ENCODE measurements at regions of chr4 and their contacts with region 1.

Region 1: GRCh38 chr4:169485791-169486742 is 126.3 kb downstream of the NEK1 start:
- DNase-seq: peak in 7 of 9 donors; percentile 5 to 46 (median 34)
- ATAC-seq: no peak
- H3K4me3 ChIP-seq: no peak overlapping the region
- H3K4me3 Mint-ChIP-seq: no peak overlapping the region
- H3K27ac ChIP-seq: no peak overlapping the region
- H3K27ac Mint-ChIP-seq: no peak overlapping the region
- H3K4me1 ChIP-seq: no peaks in the 10 kb centered on the region
- H3K4me1 Mint-ChIP-seq: no peaks in the 10 kb centered on the region
- H3K27me3 ChIP-seq: no peaks in the 10 kb centered on the region
- H3K27me3 Mint-ChIP-seq: no peaks in the 10 kb centered on the region

Region 2: DNA sequence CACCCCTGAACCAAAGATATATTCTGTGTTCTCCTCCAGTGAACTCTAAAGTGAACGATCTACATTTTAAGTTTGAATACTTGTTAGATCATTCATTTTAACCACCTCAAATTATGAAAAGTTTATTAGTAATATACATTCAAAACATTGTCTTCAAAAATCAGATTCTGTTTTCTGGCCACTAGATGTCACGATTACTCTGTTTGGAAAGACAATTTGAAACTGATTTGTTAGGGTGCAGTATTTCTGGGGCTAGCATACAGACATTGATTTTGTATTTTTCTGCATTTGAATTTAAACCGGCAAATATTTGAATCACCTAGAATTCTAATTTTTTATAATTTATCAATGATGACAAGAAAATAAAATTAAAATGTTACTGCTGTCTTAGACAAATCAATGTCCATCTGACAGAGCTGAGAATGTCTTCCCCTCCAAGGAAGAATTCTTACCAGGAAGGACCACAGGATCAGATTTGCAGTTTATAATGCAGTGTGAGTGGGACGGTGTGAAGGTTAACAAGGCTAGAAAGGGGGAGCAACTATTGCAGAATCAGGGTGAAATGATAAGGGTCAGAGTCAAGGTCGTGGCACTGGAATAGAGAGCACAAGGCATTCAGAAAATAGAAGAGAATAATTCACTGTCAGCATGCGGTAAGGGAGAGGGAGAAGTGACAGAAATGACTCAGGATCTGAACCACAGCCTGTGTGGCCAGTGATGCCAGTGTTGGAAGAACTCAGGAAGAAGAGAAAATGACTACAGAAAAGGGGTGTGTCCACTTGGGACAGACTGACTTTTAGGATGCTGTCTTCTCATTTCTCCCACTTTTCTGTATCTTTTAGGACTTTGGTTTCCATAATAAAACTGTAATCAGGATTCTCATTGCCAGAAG is 1302.1 kb before region 1 on chr4:
- CTCF ChIA-PET with region 1: no interaction called
- POLR2A ChIA-PET with region 1: no interaction called
- intact Hi-C with region 1: loop called (anchors 1 to 5 kb)
- DNase-seq: peak in 4 of 9 donors; percentile 1 to 23 (median 8)
- ATAC-seq: no peak
- H3K4me3 ChIP-seq: no peak overlapping the region
- H3K4me3 Mint-ChIP-seq: no peak overlapping the region
- H3K27ac ChIP-seq: no peak overlapping the region
- H3K27ac Mint-ChIP-seq: no peak overlapping the region
- H3K4me1 ChIP-seq: no peaks in the 10 kb centered on the region
- H3K4me1 Mint-ChIP-seq: peaks cover 0 to 6% (median 0%) of the 10 kb centered on the region in 7 donors
- H3K27me3 ChIP-seq: no peaks in the 10 kb centered on the region
- H3K27me3 Mint-ChIP-seq: peaks cover 0 to 6% (median 0%) of the 10 kb centered on the region in 5 donors

Region 3: GRCh38 chr4:168621806-168622589 is 864.1 kb before region 1 on chr4:
- CTCF ChIA-PET with region 1: no interaction called
- POLR2A ChIA-PET with region 1: no interaction called
- intact Hi-C with region 1: no loop called
- DNase-seq: no peak
- ATAC-seq: no peak
- H3K4me3 ChIP-seq: no peak overlapping the region
- H3K4me3 Mint-ChIP-seq: no peak overlapping the region
- H3K27ac ChIP-seq: no peak overlapping the region
- H3K27ac Mint-ChIP-seq: no peak overlapping the region
- H3K4me1 ChIP-seq: no peaks in the 10 kb centered on the region
- H3K4me1 Mint-ChIP-seq: no peaks in the 10 kb centered on the region
- H3K27me3 ChIP-seq: no peaks in the 10 kb centered on the region
- H3K27me3 Mint-ChIP-seq: peaks cover 31 to 42% (median 32%) of the 10 kb centered on the region in 5 donors

Region 4: DNA sequence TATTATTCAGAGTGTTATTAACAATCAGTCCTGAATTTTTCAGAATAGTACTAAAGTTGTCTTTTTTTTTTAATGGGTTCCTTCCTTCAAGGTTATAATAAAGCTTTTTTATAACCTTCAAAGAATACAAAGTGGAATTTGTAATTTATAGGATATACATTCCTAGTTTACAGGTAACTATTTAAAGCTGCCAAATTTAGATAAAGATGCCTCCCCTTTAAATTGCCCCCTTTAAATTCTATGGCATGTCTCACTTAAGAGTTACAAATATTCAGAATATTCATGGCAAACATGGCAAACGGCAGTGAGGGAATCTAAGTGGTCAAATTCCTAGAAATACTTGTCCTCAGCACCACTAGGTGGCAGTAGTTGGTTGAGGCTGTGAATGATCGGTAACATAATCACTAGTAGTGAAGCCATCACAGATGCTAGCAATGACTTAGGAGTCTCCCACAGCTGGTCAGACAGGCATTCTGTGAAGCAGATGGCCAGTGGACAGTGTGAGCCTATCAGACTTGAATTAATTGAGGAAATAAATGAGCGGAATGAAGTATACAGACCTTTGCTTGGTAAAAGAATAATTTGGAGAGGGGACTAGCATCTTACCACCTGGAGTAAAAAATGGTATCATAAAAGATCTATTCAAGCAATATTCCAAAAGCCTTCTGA is 562.4 kb before region 1 on chr4:
- CTCF ChIA-PET with region 1: interaction called, 19 read pairs
- POLR2A ChIA-PET with region 1: no interaction called
- intact Hi-C with region 1: loop called (anchors 1 kb)
- DNase-seq: peak in 8 of 9 donors; percentile 23 to 58 (median 42)
- ATAC-seq: peak; percentile 78
- H3K4me3 ChIP-seq: no peak overlapping the region
- H3K4me3 Mint-ChIP-seq: no peak overlapping the region
- H3K27ac ChIP-seq: no peak overlapping the region
- H3K27ac Mint-ChIP-seq: peak overlapping the region in 1 of 9 donors; percentile 78
- H3K4me1 ChIP-seq: no peaks in the 10 kb centered on the region
- H3K4me1 Mint-ChIP-seq: peaks cover 0 to 3% (median 0%) of the 10 kb centered on the region in 7 donors
- H3K27me3 ChIP-seq: no peaks in the 10 kb centered on the region
- H3K27me3 Mint-ChIP-seq: no peaks in the 10 kb centered on the region

Region 5: GRCh38 chr4:168995537-168996295 is 490.4 kb before region 1 on chr4:
- CTCF ChIA-PET with region 1: interaction called, 3 read pairs
- POLR2A ChIA-PET with region 1: no interaction called
- intact Hi-C with region 1: loop called in 1 of 2 experiments (anchors 1 kb)
- DNase-seq: no peak
- ATAC-seq: no peak
- H3K4me3 ChIP-seq: no peak overlapping the region
- H3K4me3 Mint-ChIP-seq: no peak overlapping the region
- H3K27ac ChIP-seq: no peak overlapping the region
- H3K27ac Mint-ChIP-seq: peak overlapping the region in 1 of 9 donors; percentile 6
- H3K4me1 ChIP-seq: no peaks in the 10 kb centered on the region
- H3K4me1 Mint-ChIP-seq: peaks cover 0 to 10% (median 5%) of the 10 kb centered on the region in 7 donors
- H3K27me3 ChIP-seq: no peaks in the 10 kb centered on the region
- H3K27me3 Mint-ChIP-seq: no peaks in the 10 kb centered on the region

Region 6: DNA sequence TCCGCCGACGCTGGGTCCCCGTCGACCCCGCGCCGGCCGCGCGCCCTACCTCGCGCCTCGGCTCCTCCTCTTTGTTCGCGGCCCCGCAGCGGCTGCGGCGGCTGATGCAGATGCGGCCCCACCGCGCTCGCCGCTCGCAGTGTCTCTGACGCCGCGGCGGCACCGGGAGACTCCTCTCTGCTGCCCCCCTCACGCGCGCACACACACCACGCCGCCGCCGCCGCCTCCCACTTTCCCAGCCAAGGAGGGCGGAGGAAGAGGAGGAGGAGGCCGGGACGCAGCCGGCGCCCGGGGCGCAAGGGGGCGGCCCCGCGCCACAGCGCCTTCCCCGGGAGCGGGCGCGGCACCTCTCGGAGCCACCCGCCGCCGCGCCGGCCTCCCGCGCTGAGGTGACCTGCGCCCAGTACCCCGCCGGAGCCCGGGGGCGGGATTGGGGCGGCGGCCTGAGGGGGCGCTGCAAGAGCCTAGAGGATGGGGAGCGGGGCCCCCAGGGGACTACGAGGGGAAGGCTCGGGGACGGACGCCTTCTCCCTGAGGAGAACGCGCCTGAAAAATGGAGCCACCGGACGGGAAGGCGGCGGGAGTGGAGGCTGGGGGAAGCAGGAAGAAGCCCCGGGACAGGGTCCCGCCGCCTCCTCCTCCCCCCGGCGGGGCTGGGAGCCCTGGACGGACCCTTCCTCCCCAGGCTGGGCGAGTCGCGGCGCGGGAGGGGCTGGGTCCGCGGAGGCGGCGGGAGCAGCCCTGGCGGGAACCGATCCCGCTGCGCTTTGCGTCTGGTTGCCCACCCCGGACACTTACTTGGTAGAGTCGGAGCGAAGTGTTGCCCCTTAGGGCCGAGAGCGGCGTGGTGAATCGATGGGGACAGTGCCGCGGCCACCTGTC is 215.0 kb before region 1 on chr4 and contains the start of gene SH3RF1:
- CTCF ChIA-PET with region 1: no interaction called
- POLR2A ChIA-PET with region 1: no interaction called
- intact Hi-C with region 1: loop called in 1 of 2 experiments (anchors 5 kb)
- DNase-seq: peak in 5 of 9 donors; percentile 2 to 60 (median 5)
- ATAC-seq: peak; percentile 68
- H3K4me3 ChIP-seq: peak within 1 kb of the TSS; percentile 42
- H3K4me3 Mint-ChIP-seq: peak within 1 kb of the TSS; percentile 46 to 88 (median 76)
- H3K27ac ChIP-seq: no peak within 1 kb of the TSS
- H3K27ac Mint-ChIP-seq: no peak within 1 kb of the TSS
- H3K4me1 ChIP-seq: no peaks in the 10 kb centered on the region
- H3K4me1 Mint-ChIP-seq: peaks cover 0 to 28% (median 16%) of the 10 kb centered on the region in 7 donors
- H3K27me3 ChIP-seq: peaks cover 4% of the 10 kb centered on the region in 2 donors
- H3K27me3 Mint-ChIP-seq: peaks cover 48 to 75% (median 61%) of the 10 kb centered on the region in 5 donors
- total RNA-seq, gene SH3RF1: 0.08 to 3.8 (median 0.50) TPM in 4 of 5 experiments, not detected in the other

Region 7: GRCh38 chr4:169369634-169370033 is 116.4 kb before region 1 on chr4:
- CTCF ChIA-PET with region 1: no interaction called
- POLR2A ChIA-PET with region 1: no interaction called
- intact Hi-C with region 1: loop called in 1 of 2 experiments (anchors 5 kb)
- DNase-seq: no peak
- ATAC-seq: no peak
- H3K4me3 ChIP-seq: no peak overlapping the region
- H3K4me3 Mint-ChIP-seq: no peak overlapping the region
- H3K27ac ChIP-seq: no peak overlapping the region
- H3K27ac Mint-ChIP-seq: no peak overlapping the region
- H3K4me1 ChIP-seq: no peaks in the 10 kb centered on the region
- H3K4me1 Mint-ChIP-seq: no peaks in the 10 kb centered on the region
- H3K27me3 ChIP-seq: no peaks in the 10 kb centered on the region
- H3K27me3 Mint-ChIP-seq: no peaks in the 10 kb centered on the region

Region 8: GRCh38 chr4:169410839-169411770 is 75.0 kb before region 1 on chr4:
- CTCF ChIA-PET with region 1: no interaction called
- POLR2A ChIA-PET with region 1: no interaction called
- intact Hi-C with region 1: loop called in 1 of 2 experiments (anchors 2 kb)
- DNase-seq: peak; percentile 8 to 79 (median 65)
- ATAC-seq: peak; percentile 96
- H3K4me3 ChIP-seq: no peak overlapping the region
- H3K4me3 Mint-ChIP-seq: peak overlapping the region in 9 of 10 donors; percentile 13 to 73 (median 59)
- H3K27ac ChIP-seq: peak overlapping the region; percentile 18
- H3K27ac Mint-ChIP-seq: peak overlapping the region; percentile 1 to 93 (median 66)
- H3K4me1 ChIP-seq: peaks cover 10 to 28% of the 10 kb centered on the region in 2 donors
- H3K4me1 Mint-ChIP-seq: peaks cover 10 to 45% (median 32%) of the 10 kb centered on the region in 7 donors
- H3K27me3 ChIP-seq: no peaks in the 10 kb centered on the region
- H3K27me3 Mint-ChIP-seq: no peaks in the 10 kb centered on the region

Region 9: GRCh38 chr4:169573889-169574288 is 87.8 kb after region 1 on chr4:
- CTCF ChIA-PET with region 1: no interaction called
- POLR2A ChIA-PET with region 1: no interaction called
- intact Hi-C with region 1: no loop called
- DNase-seq: no peak
- ATAC-seq: no peak
- H3K4me3 ChIP-seq: no peak overlapping the region
- H3K4me3 Mint-ChIP-seq: no peak overlapping the region
- H3K27ac ChIP-seq: no peak overlapping the region
- H3K27ac Mint-ChIP-seq: no peak overlapping the region
- H3K4me1 ChIP-seq: no peaks in the 10 kb centered on the region
- H3K4me1 Mint-ChIP-seq: peaks cover 0 to 8% (median 0%) of the 10 kb centered on the region in 7 donors
- H3K27me3 ChIP-seq: no peaks in the 10 kb centered on the region
- H3K27me3 Mint-ChIP-seq: no peaks in the 10 kb centered on the region

Region 10: DNA sequence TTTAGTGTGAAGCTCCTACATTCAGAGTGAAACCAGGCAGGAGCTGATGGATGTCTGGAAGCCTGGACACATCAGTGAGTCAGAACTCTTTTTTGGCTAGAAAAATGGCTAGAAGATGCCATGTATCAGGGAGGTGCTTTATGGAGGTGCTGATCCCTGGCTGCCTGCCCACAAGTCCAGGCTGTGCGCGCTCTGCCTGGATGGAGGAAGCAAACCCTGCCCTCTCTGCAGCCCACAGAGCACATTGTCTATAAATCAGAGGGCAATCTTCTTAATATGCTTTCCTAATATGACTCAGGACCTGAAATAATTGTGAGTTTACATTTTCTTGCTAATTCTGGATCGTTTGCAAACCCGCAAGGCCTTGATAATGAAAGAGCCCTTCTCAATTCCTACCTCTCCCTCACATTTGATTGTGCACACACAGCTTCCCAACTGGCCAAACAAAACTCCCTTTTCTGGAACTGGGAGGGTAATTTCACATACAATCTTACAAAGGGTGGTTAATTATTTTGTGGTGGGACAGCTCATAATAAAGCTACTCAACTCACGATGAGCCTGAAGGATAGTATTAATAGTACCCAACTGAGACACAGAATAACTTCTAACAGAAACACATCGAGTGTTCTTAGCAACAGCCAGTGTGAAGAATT is 528.4 kb after region 1 on chr4:
- CTCF ChIA-PET with region 1: no interaction called
- POLR2A ChIA-PET with region 1: no interaction called
- intact Hi-C with region 1: no loop called
- DNase-seq: no peak
- ATAC-seq: no peak
- H3K4me3 ChIP-seq: no peak overlapping the region
- H3K4me3 Mint-ChIP-seq: no peak overlapping the region
- H3K27ac ChIP-seq: no peak overlapping the region
- H3K27ac Mint-ChIP-seq: no peak overlapping the region
- H3K4me1 ChIP-seq: no peaks in the 10 kb centered on the region
- H3K4me1 Mint-ChIP-seq: no peaks in the 10 kb centered on the region
- H3K27me3 ChIP-seq: no peaks in the 10 kb centered on the region
- H3K27me3 Mint-ChIP-seq: peaks cover 4 to 10% (median 4%) of the 10 kb centered on the region in 5 donors

Measured in naive thymus-derived CD4-positive, alpha-beta T cell (primary cell).